CD8-positive, alpha-beta T cell (primary cell): ENCODE measurements at regions of chr5 and their contacts with region 1.

Region 1: GRCh38 chr5:131375351-131375750 is 111.5 kb downstream of the CDC42SE2 start:
- DNase-seq: peak in 3 of 9 experiments; percentile 34 to 71 (median 51)
- ATAC-seq: no peak
- H3K4me3 ChIP-seq: no peak overlapping the region
- H3K4me3 Mint-ChIP-seq: peak overlapping the region; percentile 27
- H3K27ac ChIP-seq: peak overlapping the region; percentile 8 to 99
- H3K27ac Mint-ChIP-seq: peak overlapping the region; percentile 89
- H3K4me1 ChIP-seq: peaks cover 89% of the 10 kb centered on the region
- H3K4me1 Mint-ChIP-seq: peaks cover 89% of the 10 kb centered on the region
- H3K27me3 ChIP-seq: no peaks in the 10 kb centered on the region
- H3K27me3 Mint-ChIP-seq: no peaks in the 10 kb centered on the region
- CTCF ChIP-seq: no peak

Region 2: DNA sequence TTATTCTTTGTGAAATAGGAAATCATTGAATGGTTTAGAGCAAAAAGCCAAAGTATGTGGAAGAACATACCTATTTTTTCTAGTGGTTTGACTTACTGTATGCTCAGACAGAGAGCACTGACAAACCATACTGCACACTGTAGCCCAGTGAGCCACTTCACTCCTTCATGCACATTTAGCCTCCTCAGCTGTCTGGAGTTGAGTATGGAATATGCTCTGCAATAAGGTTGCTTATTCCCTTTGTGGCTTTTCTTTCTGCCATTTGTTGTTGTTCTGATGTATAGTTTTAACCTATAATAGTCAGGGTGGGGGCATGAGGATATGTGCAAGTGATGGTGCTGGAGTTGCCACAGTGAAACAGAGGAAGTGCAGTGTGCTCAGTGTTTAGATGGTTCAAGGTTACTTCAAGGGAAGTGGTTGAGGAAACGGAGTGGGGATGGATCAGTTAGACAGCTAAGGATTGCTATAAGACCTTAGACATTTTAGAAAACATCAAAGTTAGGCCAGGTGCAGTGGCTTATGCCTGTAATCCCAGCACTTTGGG is 10.8 kb before region 1 on chr5:
- CTCF ChIA-PET with region 1: interaction called, 3 read pairs
- POLR2A ChIA-PET with region 1: interaction called, 10 read pairs
- intact Hi-C with region 1: loop called (anchors 1 to 2 kb)
- DNase-seq: peak in 1 of 9 experiments; percentile 54
- ATAC-seq: peak; percentile 51
- H3K4me3 ChIP-seq: no peak overlapping the region
- H3K4me3 Mint-ChIP-seq: peak overlapping the region; percentile 42
- H3K27ac ChIP-seq: peak overlapping the region; percentile 11 to 62
- H3K27ac Mint-ChIP-seq: peak overlapping the region; percentile 92
- H3K4me1 ChIP-seq: peaks cover 66% of the 10 kb centered on the region
- H3K4me1 Mint-ChIP-seq: peaks cover 78% of the 10 kb centered on the region
- H3K27me3 ChIP-seq: no peaks in the 10 kb centered on the region
- H3K27me3 Mint-ChIP-seq: no peaks in the 10 kb centered on the region
- CTCF ChIP-seq: no peak

Region 3: DNA sequence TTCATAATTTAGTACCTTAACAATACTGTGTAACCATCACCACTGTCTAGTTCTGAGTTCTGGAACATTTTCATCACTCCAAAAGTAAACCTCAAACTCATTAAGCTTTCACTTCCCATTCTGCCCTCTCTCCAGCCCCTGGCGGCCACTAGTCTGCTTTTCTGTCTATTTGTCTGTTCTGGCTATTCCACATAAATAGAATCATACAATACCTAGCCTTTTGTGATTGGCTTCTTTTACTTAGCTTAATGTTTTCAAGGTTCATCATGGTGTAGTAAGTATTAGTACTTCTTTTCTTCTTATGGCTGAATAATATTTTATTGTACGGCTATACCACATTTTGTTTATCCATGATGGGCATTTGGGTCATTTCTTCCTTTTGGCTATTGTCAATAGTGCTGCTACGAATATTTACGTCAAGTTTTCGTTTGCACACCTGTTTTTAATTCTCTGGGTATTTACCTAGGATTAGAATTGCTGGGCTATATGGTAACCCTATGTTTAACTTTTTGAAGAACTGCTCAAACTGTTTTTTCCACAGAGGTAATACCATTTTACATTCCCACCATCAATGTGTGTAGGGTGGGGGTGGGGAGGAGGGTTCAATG is 121.2 kb after region 1 on chr5:
- CTCF ChIA-PET with region 1: no interaction called
- POLR2A ChIA-PET with region 1: no interaction called
- intact Hi-C with region 1: no loop called
- DNase-seq: no peak
- ATAC-seq: no peak
- H3K4me3 ChIP-seq: no peak overlapping the region
- H3K4me3 Mint-ChIP-seq: no peak overlapping the region
- H3K27ac ChIP-seq: no peak overlapping the region
- H3K27ac Mint-ChIP-seq: no peak overlapping the region
- H3K4me1 ChIP-seq: no peaks in the 10 kb centered on the region
- H3K4me1 Mint-ChIP-seq: peaks cover 28% of the 10 kb centered on the region
- H3K27me3 ChIP-seq: no peaks in the 10 kb centered on the region
- H3K27me3 Mint-ChIP-seq: no peaks in the 10 kb centered on the region
- CTCF ChIP-seq: no peak